SK-N-SH (cell line): ENCODE measurements at regions of chr7 and their contacts with region 1.

Region 1: DNA sequence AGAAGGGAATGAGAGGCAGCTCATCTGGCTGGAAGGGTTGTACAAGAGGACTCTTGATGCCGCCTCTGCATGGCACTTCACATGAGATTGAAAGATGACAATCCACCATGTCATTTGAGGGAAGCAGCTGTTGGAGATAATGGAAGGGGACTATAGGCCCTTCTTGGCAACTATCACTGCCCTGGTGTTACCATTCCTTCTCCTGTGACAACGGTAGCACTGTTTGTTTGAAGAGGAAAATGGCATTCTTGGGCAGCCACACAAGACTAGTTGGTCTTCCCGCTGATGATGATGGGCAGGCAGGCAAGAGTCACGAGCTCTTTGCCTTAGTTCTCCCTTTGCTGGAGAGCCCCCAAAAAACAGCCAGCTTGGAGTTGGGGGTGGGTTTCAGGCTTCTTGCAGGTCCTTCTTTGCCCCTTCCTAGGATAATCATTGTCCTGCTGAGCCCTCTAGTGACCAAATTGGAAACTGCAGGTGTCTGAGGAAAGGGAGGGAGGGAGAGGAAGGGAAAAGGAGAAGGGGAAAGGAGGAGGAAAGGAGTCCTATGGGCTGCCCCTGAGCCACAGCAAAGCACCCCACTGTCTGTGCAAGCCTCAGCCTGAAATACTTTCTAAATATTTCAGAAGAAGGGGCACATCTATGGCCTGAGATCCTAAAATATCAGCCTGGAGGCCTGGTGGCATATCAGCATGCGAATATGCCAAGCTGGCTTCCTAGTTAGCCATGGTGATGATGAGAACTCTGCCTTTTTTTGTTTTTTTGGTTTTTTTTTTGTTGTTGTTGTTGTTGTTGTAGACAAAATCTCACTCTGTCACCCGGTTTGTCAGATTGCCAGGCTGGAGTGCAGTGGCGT is 165.6 kb upstream of the KMT2E start:
- DNase-seq: peak; percentile 73
- H3K4me3 ChIP-seq: no peak overlapping the region; a peak in 1 of 4 replicates
- H3K27ac ChIP-seq: no peak overlapping the region
- H3K4me1 ChIP-seq: peaks cover 0 to 4% of the 10 kb centered on the region in 2 experiments; a peak in 1 of 4 replicates
- H3K27me3 ChIP-seq: peaks cover 63% of the 10 kb centered on the region
- CTCF ChIP-seq: peak; percentile 99
- EP300 ChIP-seq: no peak
- RAD21 ChIP-seq: peak; percentile 89

Region 2: DNA sequence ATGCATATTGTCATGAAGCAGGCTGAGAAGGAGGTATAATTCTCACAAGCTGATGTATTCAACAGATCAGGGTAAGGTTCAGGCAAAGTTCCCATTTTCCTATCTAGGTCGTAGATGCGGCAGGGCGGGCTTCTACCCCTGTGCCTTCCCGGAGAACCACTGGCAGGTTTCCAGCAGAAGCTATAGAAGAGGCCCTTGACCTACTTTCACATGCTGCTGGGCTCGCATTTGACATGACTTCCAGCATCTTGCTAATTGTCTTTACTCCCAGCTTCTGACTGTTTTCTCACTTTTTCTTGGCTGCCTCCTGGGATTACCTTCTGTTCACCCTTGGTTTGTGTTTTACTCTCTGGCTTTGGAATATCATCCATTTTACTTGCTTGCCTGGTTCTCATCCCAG is 608.0 kb before region 1 on chr7:
- CTCF ChIA-PET with region 1: interaction called, 13 read pairs
- POLR2A ChIA-PET with region 1: no interaction called
- DNase-seq: no peak
- H3K4me3 ChIP-seq: no peak overlapping the region
- H3K27ac ChIP-seq: no peak overlapping the region
- H3K4me1 ChIP-seq: no peaks in the 10 kb centered on the region
- H3K27me3 ChIP-seq: peaks cover 4% of the 10 kb centered on the region; the same call in 1 of the 2 replicates
- CTCF ChIP-seq: no peak
- EP300 ChIP-seq: no peak
- RAD21 ChIP-seq: no peak

Region 3: GRCh38 chr7:104272767-104273384 is 575.5 kb before region 1 on chr7:
- CTCF ChIA-PET with region 1: interaction called, 47 read pairs
- POLR2A ChIA-PET with region 1: no interaction called
- DNase-seq: peak; percentile 41
- H3K4me3 ChIP-seq: no peak overlapping the region; a peak in 1 of 4 replicates
- H3K27ac ChIP-seq: no peak overlapping the region
- H3K4me1 ChIP-seq: no peaks in the 10 kb centered on the region
- H3K27me3 ChIP-seq: 0 out of 2 replicates have a peak, but pooled peaks cover 5% of the 10 kb centered on the region
- CTCF ChIP-seq: peak; percentile 79
- EP300 ChIP-seq: no peak
- RAD21 ChIP-seq: peak; percentile 77

Region 4: GRCh38 chr7:104351012-104351411 is 497.4 kb before region 1 on chr7:
- CTCF ChIA-PET with region 1: interaction called, 156 read pairs
- POLR2A ChIA-PET with region 1: no interaction called
- DNase-seq: no peak
- H3K4me3 ChIP-seq: no peak overlapping the region
- H3K27ac ChIP-seq: no peak overlapping the region
- H3K4me1 ChIP-seq: no peaks in the 10 kb centered on the region
- H3K27me3 ChIP-seq: peaks cover 36% of the 10 kb centered on the region
- CTCF ChIP-seq: no peak
- EP300 ChIP-seq: no peak
- RAD21 ChIP-seq: no peak

Region 5: DNA sequence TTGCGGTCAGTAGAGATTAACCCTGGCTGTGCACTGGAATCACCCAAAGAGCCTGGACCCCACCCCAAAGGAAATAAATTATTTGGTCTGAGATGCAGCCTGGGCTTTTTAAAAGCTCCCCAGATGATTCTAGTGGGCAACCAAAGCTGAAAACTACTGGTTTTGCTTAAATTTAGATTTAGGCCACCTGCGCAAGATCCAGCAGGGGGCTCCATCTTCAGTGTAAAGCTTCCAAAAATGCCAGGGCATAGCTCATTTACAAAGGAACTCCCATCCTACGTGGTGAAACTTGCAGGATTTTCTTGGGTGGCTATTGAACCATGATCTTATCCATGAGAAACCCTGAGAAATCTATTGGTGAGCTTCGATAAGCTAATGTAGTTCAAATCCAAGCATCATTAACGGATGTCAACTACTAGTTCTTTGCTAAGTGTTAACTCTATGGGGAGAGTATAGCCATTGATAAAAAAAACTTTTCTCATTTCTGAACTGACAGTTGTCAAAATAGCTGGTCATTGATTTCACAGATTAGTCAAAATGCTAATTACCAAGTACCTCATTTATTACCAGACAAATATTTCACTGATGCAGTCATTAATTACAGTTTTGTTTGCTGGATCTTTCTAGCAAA is 204.7 kb before region 1 on chr7:
- CTCF ChIA-PET with region 1: interaction called, 29 read pairs
- POLR2A ChIA-PET with region 1: no interaction called
- DNase-seq: peak; percentile 49
- H3K4me3 ChIP-seq: no peak overlapping the region
- H3K27ac ChIP-seq: no peak overlapping the region
- H3K4me1 ChIP-seq: peaks cover 0 to 2% of the 10 kb centered on the region in 2 experiments; a peak in 1 of 4 replicates
- H3K27me3 ChIP-seq: no peaks in the 10 kb centered on the region; the same call in 1 of the 2 replicates
- CTCF ChIP-seq: peak; percentile 81
- EP300 ChIP-seq: no peak
- RAD21 ChIP-seq: peak; percentile 62

Region 6: GRCh38 chr7:104883718-104884452 is 35.5 kb after region 1 on chr7:
- CTCF ChIA-PET with region 1: interaction called, 22 read pairs
- POLR2A ChIA-PET with region 1: no interaction called
- DNase-seq: peak; percentile 84
- H3K4me3 ChIP-seq: no peak overlapping the region
- H3K27ac ChIP-seq: no peak overlapping the region
- H3K4me1 ChIP-seq: no peaks in the 10 kb centered on the region; a peak in 1 of 4 replicates
- H3K27me3 ChIP-seq: peaks cover 26% of the 10 kb centered on the region; the same call in 1 of the 2 replicates
- CTCF ChIP-seq: peak; percentile 99
- EP300 ChIP-seq: no peak
- RAD21 ChIP-seq: peak; percentile 84

Region 7: DNA sequence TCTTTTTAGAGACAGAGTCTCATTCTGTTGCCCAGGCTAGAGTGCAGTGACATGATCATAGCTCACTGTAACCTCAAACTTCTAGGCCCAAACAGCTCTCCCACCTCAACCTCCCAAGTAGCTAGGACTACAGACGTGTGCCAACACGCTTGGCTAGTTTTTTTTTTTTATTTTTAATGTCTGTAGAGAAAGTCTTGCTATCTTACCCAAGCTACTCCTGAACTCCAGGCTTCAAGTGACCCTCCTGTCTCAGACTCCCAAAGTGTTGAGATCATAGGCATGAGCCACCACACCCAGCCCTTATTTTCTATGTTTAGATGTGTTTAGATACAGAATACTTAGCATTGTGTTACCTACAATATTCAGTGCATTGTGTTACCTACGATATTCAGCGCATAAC is 212.1 kb after region 1 on chr7:
- CTCF ChIA-PET with region 1: no interaction called
- POLR2A ChIA-PET with region 1: no interaction called
- DNase-seq: no peak
- H3K4me3 ChIP-seq: no peak overlapping the region
- H3K27ac ChIP-seq: no peak overlapping the region
- H3K4me1 ChIP-seq: peaks cover 2 to 12% of the 10 kb centered on the region in 2 experiments; a peak in 2 of 4 replicates
- H3K27me3 ChIP-seq: no peaks in the 10 kb centered on the region
- CTCF ChIP-seq: no peak
- EP300 ChIP-seq: no peak
- RAD21 ChIP-seq: no peak